CD4-positive, alpha-beta T cell (primary cell): ENCODE measurements at regions of chr15 and their contacts with region 1.

Region 1: GRCh38 chr15:50908210-50909009 is at the start of gene AP4E1:
- DNase-seq: peak; percentile 89 to 97 (median 93)
- ATAC-seq: peak; percentile 40
- H3K4me3 ChIP-seq: peak within 1 kb of the TSS; percentile 80
- H3K4me3 Mint-ChIP-seq: peak within 1 kb of the TSS; percentile 94
- H3K27ac ChIP-seq: peak within 1 kb of the TSS; percentile 91 to 100
- H3K27ac Mint-ChIP-seq: peak within 1 kb of the TSS; percentile 98
- H3K4me1 ChIP-seq: peaks cover 19% of the 10 kb centered on the region
- H3K4me1 Mint-ChIP-seq: peaks cover 29% of the 10 kb centered on the region
- H3K27me3 ChIP-seq: no peaks in the 10 kb centered on the region
- H3K27me3 Mint-ChIP-seq: no peaks in the 10 kb centered on the region
- CTCF ChIP-seq: peak; percentile 87
- total RNA-seq, gene AP4E1: 6.3 to 6.6 TPM

Region 2: GRCh38 chr15:50116473-50116872 is 791.9 kb before region 1 on chr15:
- CTCF ChIA-PET with region 1: no interaction called
- POLR2A ChIA-PET with region 1: no interaction called
- intact Hi-C with region 1: no loop called
- DNase-seq: peak in 2 of 14 experiments; percentile 20 to 32
- ATAC-seq: no peak
- H3K4me3 ChIP-seq: no peak overlapping the region
- H3K4me3 Mint-ChIP-seq: no peak overlapping the region
- H3K27ac ChIP-seq: no peak overlapping the region
- H3K27ac Mint-ChIP-seq: no peak overlapping the region
- H3K4me1 ChIP-seq: no peaks in the 10 kb centered on the region
- H3K4me1 Mint-ChIP-seq: peaks cover 11% of the 10 kb centered on the region
- H3K27me3 ChIP-seq: no peaks in the 10 kb centered on the region
- H3K27me3 Mint-ChIP-seq: peaks cover 6% of the 10 kb centered on the region
- CTCF ChIP-seq: no peak

Region 3: DNA sequence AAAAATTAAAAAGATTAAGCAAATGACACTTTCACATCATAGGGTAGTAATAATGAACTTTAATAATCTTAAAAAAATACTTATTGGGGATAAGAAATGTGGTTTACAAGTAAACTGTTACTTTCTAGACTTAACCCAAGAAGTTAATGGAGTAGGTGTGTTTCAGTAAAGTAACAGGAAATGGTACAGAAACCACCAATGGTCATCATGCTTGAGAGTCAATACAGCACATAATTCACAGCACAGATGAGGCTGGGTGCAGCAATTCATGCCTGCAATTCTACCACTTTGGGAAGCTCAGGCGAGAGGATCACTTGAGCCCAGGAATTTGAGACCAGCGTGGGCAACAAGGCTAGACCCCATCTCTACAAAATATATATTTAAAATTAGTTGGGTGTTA is 350.4 kb before region 1 on chr15:
- CTCF ChIA-PET with region 1: no interaction called
- POLR2A ChIA-PET with region 1: no interaction called
- intact Hi-C with region 1: no loop called
- DNase-seq: no peak
- ATAC-seq: no peak
- H3K4me3 ChIP-seq: no peak overlapping the region
- H3K4me3 Mint-ChIP-seq: no peak overlapping the region
- H3K27ac ChIP-seq: no peak overlapping the region
- H3K27ac Mint-ChIP-seq: no peak overlapping the region
- H3K4me1 ChIP-seq: no peaks in the 10 kb centered on the region
- H3K4me1 Mint-ChIP-seq: peaks cover 7% of the 10 kb centered on the region
- H3K27me3 ChIP-seq: no peaks in the 10 kb centered on the region
- H3K27me3 Mint-ChIP-seq: no peaks in the 10 kb centered on the region
- CTCF ChIP-seq: no peak

Region 4: GRCh38 chr15:50675536-50676144 is 232.8 kb before region 1 on chr15:
- CTCF ChIA-PET with region 1: no interaction called
- POLR2A ChIA-PET with region 1: interaction called, 3 read pairs
- intact Hi-C with region 1: loop called (anchors 1 kb)
- DNase-seq: peak in 3 of 14 experiments; percentile 49 to 60 (median 53)
- ATAC-seq: peak; percentile 43
- H3K4me3 ChIP-seq: no peak overlapping the region
- H3K4me3 Mint-ChIP-seq: no peak overlapping the region
- H3K27ac ChIP-seq: no peak overlapping the region
- H3K27ac Mint-ChIP-seq: peak overlapping the region; percentile 59
- H3K4me1 ChIP-seq: peaks cover 21% of the 10 kb centered on the region
- H3K4me1 Mint-ChIP-seq: peaks cover 22% of the 10 kb centered on the region
- H3K27me3 ChIP-seq: no peaks in the 10 kb centered on the region
- H3K27me3 Mint-ChIP-seq: no peaks in the 10 kb centered on the region
- CTCF ChIP-seq: peak; percentile 93

Region 5: DNA sequence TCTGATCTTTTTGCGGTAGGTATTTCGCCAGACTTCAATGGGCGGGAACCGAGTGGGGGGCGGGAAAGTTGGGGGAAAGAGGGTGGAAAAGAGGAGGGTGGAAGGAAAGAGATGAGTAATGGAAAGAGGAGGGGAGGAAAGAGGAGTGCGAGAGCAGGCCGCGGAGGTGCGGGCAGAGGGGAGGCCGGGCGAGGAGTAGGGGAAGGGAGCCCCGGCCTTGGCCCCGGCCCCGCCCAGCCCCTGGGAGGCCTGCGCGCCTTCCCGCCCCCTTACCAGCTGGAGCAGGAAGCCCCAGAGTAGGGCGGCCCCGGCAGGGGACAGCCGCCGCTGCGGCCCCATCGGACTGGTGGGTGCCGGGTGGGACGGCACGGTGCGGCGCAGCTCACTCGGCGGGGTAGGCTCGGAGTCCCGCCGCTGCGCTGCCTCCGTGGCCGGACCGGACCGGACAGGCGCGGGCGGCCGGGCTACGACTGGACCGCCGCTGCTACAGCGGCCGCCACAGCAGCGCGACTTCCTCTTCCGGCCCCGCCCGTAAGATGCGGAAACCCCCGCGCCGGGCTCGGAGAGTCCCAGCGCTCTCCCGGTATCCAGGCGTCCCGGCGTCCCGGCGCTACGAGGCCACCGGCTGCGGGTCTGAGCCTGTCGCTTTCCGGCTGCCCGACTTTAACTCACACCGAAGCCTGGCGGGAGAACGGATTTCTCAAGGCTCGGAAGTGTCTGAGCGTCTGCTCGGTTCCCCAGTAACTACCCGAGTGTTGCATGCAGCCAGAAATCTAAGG is 143.0 kb before region 1 on chr15 and contains the start of gene SPPL2A:
- CTCF ChIA-PET with region 1: no interaction called
- POLR2A ChIA-PET with region 1: no interaction called
- intact Hi-C with region 1: loop called (anchors 5 kb)
- DNase-seq: peak; percentile 47 to 88 (median 69)
- ATAC-seq: peak; percentile 89
- H3K4me3 ChIP-seq: peak within 1 kb of the TSS; percentile 72
- H3K4me3 Mint-ChIP-seq: peak within 1 kb of the TSS; percentile 94
- H3K27ac ChIP-seq: peak within 1 kb of the TSS; percentile 82 to 88
- H3K27ac Mint-ChIP-seq: peak within 1 kb of the TSS; percentile 84
- H3K4me1 ChIP-seq: peaks cover 25% of the 10 kb centered on the region
- H3K4me1 Mint-ChIP-seq: peaks cover 44% of the 10 kb centered on the region
- H3K27me3 ChIP-seq: no peaks in the 10 kb centered on the region
- H3K27me3 Mint-ChIP-seq: no peaks in the 10 kb centered on the region
- CTCF ChIP-seq: no peak
- total RNA-seq, gene SPPL2A: 26.6 to 30.7 TPM

Region 6: DNA sequence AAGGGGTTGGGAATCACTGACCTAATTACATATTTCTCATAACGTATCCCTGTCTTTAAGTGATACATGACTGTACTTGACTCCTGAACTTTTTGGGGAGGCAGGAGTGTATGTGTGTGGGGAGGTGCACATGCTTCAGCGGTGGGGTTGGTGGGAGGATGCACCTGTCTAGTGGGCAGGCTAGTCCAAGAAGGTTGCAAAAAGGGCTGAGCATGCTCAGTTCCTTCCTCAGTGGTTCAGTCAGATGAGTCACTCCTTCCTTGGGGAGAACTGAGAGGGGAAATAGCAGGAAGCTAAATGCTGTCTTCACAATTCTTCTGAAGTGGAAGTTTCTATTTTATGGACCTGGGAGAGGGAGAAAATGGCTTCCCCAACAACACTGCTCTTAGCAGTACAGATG is 24.5 kb before region 1 on chr15:
- CTCF ChIA-PET with region 1: interaction called, 13 read pairs
- POLR2A ChIA-PET with region 1: interaction called, 3 read pairs
- intact Hi-C with region 1: loop called (anchors 1 to 2 kb)
- DNase-seq: peak in 4 of 14 experiments; percentile 24 to 53 (median 40)
- ATAC-seq: no peak
- H3K4me3 ChIP-seq: no peak overlapping the region
- H3K4me3 Mint-ChIP-seq: no peak overlapping the region
- H3K27ac ChIP-seq: no peak overlapping the region
- H3K27ac Mint-ChIP-seq: no peak overlapping the region
- H3K4me1 ChIP-seq: peaks cover 26% of the 10 kb centered on the region
- H3K4me1 Mint-ChIP-seq: peaks cover 10% of the 10 kb centered on the region
- H3K27me3 ChIP-seq: no peaks in the 10 kb centered on the region
- H3K27me3 Mint-ChIP-seq: no peaks in the 10 kb centered on the region
- CTCF ChIP-seq: no peak